ENCODE measurements at regions of chrX and their contacts with region 1.

Region 1: GRCh38 chrX:4547213-4547836 is 833.9 kb upstream of the PRKX start:
- DNase-seq: peak; percentile 15 to 43 (median 40)
- ATAC-seq: no peak
- H3K4me3 ChIP-seq: no peak overlapping the region
- H3K27ac ChIP-seq: no peak overlapping the region
- H3K4me1 ChIP-seq: no peaks in the 10 kb centered on the region
- H3K27me3 ChIP-seq: no peaks in the 10 kb centered on the region
- CTCF ChIP-seq: peak; percentile 31 to 73 (median 64); a peak in 5 of 6 replicates
- EP300 ChIP-seq: no peak
- POLR2A ChIP-seq: no peak
- RAD21 ChIP-seq: peak; percentile 65 to 67

Region 2: GRCh38 chrX:2928191-2928763 is 1619.0 kb before region 1 on chrX:
- CTCF ChIA-PET with region 1: no interaction called
- POLR2A ChIA-PET with region 1: no interaction called
- in situ Hi-C with region 1: no loop called
- intact Hi-C with region 1: no loop called
- DNase-seq: no peak
- ATAC-seq: no peak
- H3K4me3 ChIP-seq: no peak overlapping the region
- H3K27ac ChIP-seq: no peak overlapping the region
- H3K4me1 ChIP-seq: peaks cover 0 to 7% of the 10 kb centered on the region in 2 experiments; a peak in 2 of 5 replicates
- H3K27me3 ChIP-seq: no peaks in the 10 kb centered on the region
- CTCF ChIP-seq: no peak
- EP300 ChIP-seq: no peak
- POLR2A ChIP-seq: no peak
- RAD21 ChIP-seq: no peak

Region 3: DNA sequence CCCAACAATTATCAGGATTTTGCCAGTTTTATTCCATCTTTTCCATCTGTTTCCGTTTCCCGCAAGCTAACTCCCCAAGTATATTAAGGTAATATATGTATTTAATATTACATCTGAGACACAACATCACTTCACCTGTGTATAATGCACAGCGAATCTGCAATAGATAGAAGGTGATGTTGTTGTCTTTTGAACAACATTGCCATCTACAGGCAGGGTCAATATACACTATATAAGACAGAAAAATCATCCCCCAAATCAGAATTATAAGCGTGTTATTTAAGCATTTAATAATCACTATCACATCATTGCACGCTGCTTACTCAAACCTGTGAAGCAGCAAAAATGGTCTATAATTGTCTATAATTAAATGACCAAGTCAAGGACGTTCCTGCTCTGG is 565.8 kb after region 1 on chrX:
- CTCF ChIA-PET with region 1: no interaction called
- POLR2A ChIA-PET with region 1: no interaction called
- in situ Hi-C with region 1: no loop called
- intact Hi-C with region 1: loop called (anchors 5 kb)
- DNase-seq: peak in 2 of 4 experiments; percentile 1 to 2
- ATAC-seq: no peak
- H3K4me3 ChIP-seq: no peak overlapping the region
- H3K27ac ChIP-seq: no peak overlapping the region
- H3K4me1 ChIP-seq: no peaks in the 10 kb centered on the region
- H3K27me3 ChIP-seq: no peaks in the 10 kb centered on the region
- CTCF ChIP-seq: no peak
- EP300 ChIP-seq: no peak
- POLR2A ChIP-seq: no peak
- RAD21 ChIP-seq: peak in 1 of 2 experiments; percentile 39; a peak in 3 of 4 replicates

Region 4: DNA sequence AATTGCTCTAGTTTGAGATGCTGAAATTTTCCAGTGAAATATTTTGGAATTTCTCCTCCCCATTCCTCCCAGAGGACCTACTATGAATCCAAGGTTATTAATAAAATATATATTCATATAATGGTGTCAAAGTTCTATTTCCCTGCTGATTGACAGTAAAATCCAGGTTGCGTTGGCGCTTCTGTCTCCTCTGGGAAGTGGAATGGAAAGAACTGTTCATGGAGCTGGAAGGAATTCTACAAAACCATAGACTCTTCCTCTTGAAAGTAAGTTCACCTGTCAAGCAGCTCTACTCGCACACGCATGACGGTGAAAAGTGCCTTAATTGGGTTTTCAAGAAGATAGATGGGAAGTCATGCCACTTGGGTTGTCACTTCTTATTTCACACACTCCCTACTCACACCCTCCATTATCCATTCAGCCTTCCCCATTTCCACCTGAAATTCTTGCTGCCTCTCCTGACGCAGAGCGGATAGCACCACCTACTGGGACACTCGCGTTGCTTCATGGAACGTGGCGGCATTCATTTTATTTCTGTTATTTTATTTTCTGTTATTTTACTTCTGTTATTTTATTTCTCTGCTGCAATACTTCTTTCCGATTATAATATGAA is 1329.8 kb after region 1 on chrX:
- CTCF ChIA-PET with region 1: interaction called, 3 read pairs
- POLR2A ChIA-PET with region 1: no interaction called
- in situ Hi-C with region 1: no loop called
- intact Hi-C with region 1: loop called (anchors 5 kb)
- DNase-seq: peak in 1 of 4 experiments; percentile 8
- ATAC-seq: no peak
- H3K4me3 ChIP-seq: no peak overlapping the region
- H3K27ac ChIP-seq: no peak overlapping the region
- H3K4me1 ChIP-seq: no peaks in the 10 kb centered on the region
- H3K27me3 ChIP-seq: no peaks in the 10 kb centered on the region
- CTCF ChIP-seq: peak in 2 of 3 experiments; percentile 23 to 30; a peak in 2 of 6 replicates
- EP300 ChIP-seq: no peak
- POLR2A ChIP-seq: no peak
- RAD21 ChIP-seq: peak; percentile 41 to 46